Activated CD4-positive, alpha-beta T cell treated with anti-CD3 and anti-CD28 coated beads for 36 hours (primary cell): ENCODE measurements at regions of chr9 and their contacts with region 1.

Region 1: GRCh38 chr9:125293134-125293533 is 31.5 kb downstream of the GAPVD1 start:
- DNase-seq: no peak
- ATAC-seq: peak; percentile 86
- H3K4me3 Mint-ChIP-seq: no peak overlapping the region
- H3K27ac Mint-ChIP-seq: no peak overlapping the region
- H3K4me1 Mint-ChIP-seq: peaks cover 2% of the 10 kb centered on the region
- H3K27me3 Mint-ChIP-seq: no peaks in the 10 kb centered on the region

Region 2: GRCh38 chr9:123796618-123797484 is 1496.3 kb before region 1 on chr9:
- CTCF ChIA-PET with region 1: no interaction called
- POLR2A ChIA-PET with region 1: no interaction called
- intact Hi-C with region 1: no loop called
- DNase-seq: no peak
- ATAC-seq: no peak
- H3K4me3 Mint-ChIP-seq: no peak overlapping the region
- H3K27ac Mint-ChIP-seq: no peak overlapping the region
- H3K4me1 Mint-ChIP-seq: peaks cover 9% of the 10 kb centered on the region
- H3K27me3 Mint-ChIP-seq: no peaks in the 10 kb centered on the region

Region 3: GRCh38 chr9:124934290-124934689 is 358.8 kb before region 1 on chr9:
- CTCF ChIA-PET with region 1: no interaction called
- POLR2A ChIA-PET with region 1: no interaction called
- intact Hi-C with region 1: no loop called
- DNase-seq: no peak
- ATAC-seq: no peak
- H3K4me3 Mint-ChIP-seq: no peak overlapping the region
- H3K27ac Mint-ChIP-seq: no peak overlapping the region
- H3K4me1 Mint-ChIP-seq: peaks cover 12% of the 10 kb centered on the region
- H3K27me3 Mint-ChIP-seq: no peaks in the 10 kb centered on the region

Region 4: GRCh38 chr9:125280945-125281344 is 12.2 kb before region 1 on chr9:
- CTCF ChIA-PET with region 1: no interaction called
- POLR2A ChIA-PET with region 1: no interaction called
- intact Hi-C with region 1: loop called in 1 of 2 experiments (anchors 1 kb)
- DNase-seq: no peak
- ATAC-seq: no peak
- H3K4me3 Mint-ChIP-seq: no peak overlapping the region
- H3K27ac Mint-ChIP-seq: no peak overlapping the region
- H3K4me1 Mint-ChIP-seq: peaks cover 3% of the 10 kb centered on the region
- H3K27me3 Mint-ChIP-seq: no peaks in the 10 kb centered on the region

Region 5: DNA sequence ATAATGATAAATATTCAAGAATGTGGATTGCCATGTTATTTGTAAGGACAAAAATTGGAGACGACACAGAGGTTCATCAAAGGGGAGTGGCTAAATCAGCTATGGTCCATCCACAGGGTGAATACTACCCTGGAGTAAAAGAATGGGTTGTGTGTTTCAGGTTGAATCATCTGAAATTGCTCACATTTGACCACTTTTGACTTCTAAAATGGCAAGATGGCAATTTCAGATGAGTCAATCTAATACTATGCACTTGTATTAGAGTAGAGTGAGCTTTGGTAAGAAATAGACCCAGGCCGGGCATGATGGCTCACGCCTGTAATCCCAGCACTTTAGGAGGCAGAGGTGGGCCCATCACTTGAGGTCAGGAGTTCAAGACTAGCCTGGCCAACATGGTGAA is 100.3 kb after region 1 on chr9:
- CTCF ChIA-PET with region 1: no interaction called
- POLR2A ChIA-PET with region 1: no interaction called
- intact Hi-C with region 1: no loop called
- DNase-seq: no peak
- ATAC-seq: peak; percentile 76
- H3K4me3 Mint-ChIP-seq: no peak overlapping the region
- H3K27ac Mint-ChIP-seq: no peak overlapping the region
- H3K4me1 Mint-ChIP-seq: no peaks in the 10 kb centered on the region
- H3K27me3 Mint-ChIP-seq: no peaks in the 10 kb centered on the region